Activated CD8-positive, alpha-beta T cell treated with anti-CD3 and anti-CD28 coated beads, Interleukin-2, amount 10 ng/mL, durations not matched to agents 7 days and 5 days (primary cell): ENCODE measurements at regions of chr14 and their contacts with region 1.

Region 1: GRCh38 chr14:51996148-51996746 is 6.9 kb downstream of the RTRAF start:
- DNase-seq: peak; percentile 50
- ATAC-seq: no peak
- H3K4me3 Mint-ChIP-seq: no peak overlapping the region
- H3K27ac Mint-ChIP-seq: no peak overlapping the region
- H3K4me1 Mint-ChIP-seq: peaks cover 19% of the 10 kb centered on the region
- H3K27me3 Mint-ChIP-seq: no peaks in the 10 kb centered on the region

Region 2: DNA sequence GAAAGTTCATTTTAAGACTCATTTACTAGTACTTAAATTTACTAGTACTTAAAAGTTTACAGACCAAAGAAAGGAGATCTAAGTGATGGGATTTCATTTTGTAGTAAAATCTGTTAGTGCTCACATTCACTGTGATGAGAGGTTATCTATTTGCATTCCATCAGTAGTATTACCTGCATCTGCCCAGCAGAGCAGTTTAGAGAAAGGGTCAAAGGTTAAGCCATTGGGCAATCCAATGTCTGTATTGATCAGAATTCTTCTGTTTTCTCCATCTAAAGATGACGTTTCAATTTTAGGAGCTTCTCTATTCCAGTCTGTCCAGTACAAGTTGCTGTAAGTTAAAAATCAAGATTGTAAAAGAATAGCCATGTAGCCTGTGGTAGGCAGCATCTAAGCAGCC is 11.4 kb after region 1 on chr14:
- CTCF ChIA-PET with region 1: interaction called, 10 read pairs
- POLR2A ChIA-PET with region 1: no interaction called
- DNase-seq: no peak
- ATAC-seq: no peak
- H3K4me3 Mint-ChIP-seq: no peak overlapping the region
- H3K27ac Mint-ChIP-seq: no peak overlapping the region
- H3K4me1 Mint-ChIP-seq: no peaks in the 10 kb centered on the region
- H3K27me3 Mint-ChIP-seq: no peaks in the 10 kb centered on the region

Region 3: GRCh38 chr14:52015411-52016030 is 19.3 kb after region 1 on chr14:
- CTCF ChIA-PET with region 1: interaction called, 10 read pairs
- POLR2A ChIA-PET with region 1: no interaction called
- DNase-seq: peak; percentile 33
- ATAC-seq: peak; percentile 28
- H3K4me3 Mint-ChIP-seq: no peak overlapping the region
- H3K27ac Mint-ChIP-seq: no peak overlapping the region
- H3K4me1 Mint-ChIP-seq: peaks cover 7% of the 10 kb centered on the region
- H3K27me3 Mint-ChIP-seq: peaks cover 9% of the 10 kb centered on the region

Region 4: GRCh38 chr14:52020866-52021717 is 24.8 kb after region 1 on chr14:
- CTCF ChIA-PET with region 1: interaction called, 10 read pairs
- POLR2A ChIA-PET with region 1: no interaction called
- DNase-seq: no peak
- ATAC-seq: peak; percentile 31
- H3K4me3 Mint-ChIP-seq: no peak overlapping the region
- H3K27ac Mint-ChIP-seq: peak overlapping the region; percentile 58
- H3K4me1 Mint-ChIP-seq: peaks cover 40% of the 10 kb centered on the region
- H3K27me3 Mint-ChIP-seq: peaks cover 6% of the 10 kb centered on the region

Region 5: GRCh38 chr14:52131640-52132320 is 135.5 kb after region 1 on chr14:
- CTCF ChIA-PET with region 1: interaction called, 11 read pairs
- POLR2A ChIA-PET with region 1: no interaction called
- DNase-seq: peak; percentile 67
- ATAC-seq: no peak
- H3K4me3 Mint-ChIP-seq: no peak overlapping the region
- H3K27ac Mint-ChIP-seq: no peak overlapping the region
- H3K4me1 Mint-ChIP-seq: peaks cover 17% of the 10 kb centered on the region
- H3K27me3 Mint-ChIP-seq: peaks cover 15% of the 10 kb centered on the region

Region 6: GRCh38 chr14:52272375-52272774 is 276.1 kb after region 1 on chr14:
- CTCF ChIA-PET with region 1: interaction called, 18 read pairs
- POLR2A ChIA-PET with region 1: no interaction called
- DNase-seq: peak; percentile 65
- ATAC-seq: peak; percentile 20
- H3K4me3 Mint-ChIP-seq: no peak overlapping the region
- H3K27ac Mint-ChIP-seq: no peak overlapping the region
- H3K4me1 Mint-ChIP-seq: peaks cover 27% of the 10 kb centered on the region
- H3K27me3 Mint-ChIP-seq: peaks cover 54% of the 10 kb centered on the region